Right lobe of liver (tissue), 6 donors: ENCODE measurements at regions of chr11 and their contacts with region 1.

Region 1: GRCh38 chr11:93537767-93538261 is 5.4 kb downstream of the SMCO4 start:
- DNase-seq: peak; percentile 80 to 93 (median 90)
- ATAC-seq: peak; percentile 80 to 87 (median 85)
- H3K4me3 ChIP-seq: peak overlapping the region; percentile 9 to 50 (median 47)
- H3K27ac ChIP-seq: peak overlapping the region; percentile 76 to 87 (median 80)
- H3K4me1 ChIP-seq: peaks cover 0 to 53% (median 13%) of the 10 kb centered on the region in 4 donors
- H3K27me3 ChIP-seq: no peaks in the 10 kb centered on the region
- CTCF ChIP-seq: no peak
- POLR2A ChIP-seq: peak; percentile 89

Region 2: DNA sequence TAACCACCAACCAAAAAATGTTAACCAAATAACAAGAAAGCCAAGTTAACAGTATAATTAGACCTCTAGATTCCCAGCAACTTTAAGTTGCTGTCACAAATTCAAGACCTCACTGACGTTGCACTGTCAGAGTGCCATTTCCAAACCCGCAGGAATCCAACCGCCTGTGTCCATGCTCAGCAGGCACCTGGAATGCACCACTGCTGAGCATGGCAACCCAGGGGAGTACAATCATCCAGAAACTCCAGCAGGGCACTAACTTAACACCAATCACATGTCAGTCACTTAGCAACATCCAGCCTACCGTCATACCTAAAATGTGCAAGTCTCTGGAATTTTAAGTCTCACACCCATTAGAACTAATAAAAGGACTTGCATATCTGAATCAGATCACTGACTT is 43.5 kb before region 1 on chr11:
- intact Hi-C with region 1: loop called in 1 of 2 experiments (anchors 5 kb)
- DNase-seq: no peak
- ATAC-seq: no peak
- H3K4me3 ChIP-seq: no peak overlapping the region
- H3K27ac ChIP-seq: peak overlapping the region in 1 of 3 donors; percentile 49
- H3K4me1 ChIP-seq: peaks cover 0 to 54% (median 25%) of the 10 kb centered on the region in 4 donors
- H3K27me3 ChIP-seq: no peaks in the 10 kb centered on the region
- CTCF ChIP-seq: no peak
- POLR2A ChIP-seq: no peak